Caco-2 (cell line): ENCODE measurements at regions of chr12 and their contacts with region 1.

Region 1: GRCh38 chr12:101570047-101570446 is 24.7 kb upstream of the MYBPC1 start:
- DNase-seq: peak; percentile 41 to 49
- H3K4me3 ChIP-seq: no peak overlapping the region
- H3K4me3 Mint-ChIP-seq: peak overlapping the region; percentile 7
- H3K27ac Mint-ChIP-seq: no peak overlapping the region
- H3K4me1 ChIP-seq: no peaks in the 10 kb centered on the region
- H3K4me1 Mint-ChIP-seq: peaks cover 8% of the 10 kb centered on the region
- H3K27me3 ChIP-seq: no peaks in the 10 kb centered on the region
- H3K27me3 Mint-ChIP-seq: no peaks in the 10 kb centered on the region
- CTCF ChIP-seq: peak; percentile 51 to 52

Region 2: GRCh38 chr12:100842156-100842555 is 727.9 kb before region 1 on chr12:
- CTCF ChIA-PET with region 1: no interaction called
- POLR2A ChIA-PET with region 1: no interaction called
- intact Hi-C with region 1: no loop called
- DNase-seq: no peak
- H3K4me3 ChIP-seq: no peak overlapping the region
- H3K4me3 Mint-ChIP-seq: no peak overlapping the region
- H3K27ac Mint-ChIP-seq: no peak overlapping the region
- H3K4me1 ChIP-seq: no peaks in the 10 kb centered on the region
- H3K4me1 Mint-ChIP-seq: peaks cover 9% of the 10 kb centered on the region
- H3K27me3 ChIP-seq: no peaks in the 10 kb centered on the region
- H3K27me3 Mint-ChIP-seq: peaks cover 18% of the 10 kb centered on the region
- CTCF ChIP-seq: no peak

Region 3: DNA sequence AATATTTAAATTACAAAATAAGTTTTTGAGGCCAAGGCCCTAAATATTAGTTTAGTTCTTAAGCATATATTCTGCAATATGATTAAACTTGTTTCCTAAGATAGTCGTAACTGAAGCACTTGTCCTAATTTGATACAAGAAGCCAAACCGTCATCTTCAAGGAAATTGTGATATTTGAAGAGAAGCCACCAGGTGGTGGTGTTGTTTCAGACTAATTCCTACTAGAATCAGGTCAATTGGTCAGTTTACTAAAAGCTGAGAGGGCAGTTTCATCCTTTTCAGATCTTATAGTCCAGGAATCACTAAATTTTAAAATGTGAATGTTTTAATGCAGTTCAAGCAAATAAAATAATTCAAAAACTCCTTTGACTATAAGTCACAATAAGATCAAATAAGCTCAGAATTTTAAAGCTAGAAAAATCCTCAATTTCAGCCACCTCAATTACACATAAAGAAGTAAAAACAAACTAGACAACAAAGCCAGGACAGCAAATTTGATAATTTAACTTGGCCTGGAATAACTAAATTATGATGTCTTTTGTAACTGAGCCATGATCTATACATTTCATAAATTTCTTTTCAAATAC is 155.4 kb before region 1 on chr12:
- CTCF ChIA-PET with region 1: no interaction called
- POLR2A ChIA-PET with region 1: no interaction called
- intact Hi-C with region 1: loop called (anchors 1 kb)
- DNase-seq: peak in 1 of 2 experiments; percentile 65
- H3K4me3 ChIP-seq: no peak overlapping the region
- H3K4me3 Mint-ChIP-seq: no peak overlapping the region
- H3K27ac Mint-ChIP-seq: no peak overlapping the region
- H3K4me1 ChIP-seq: no peaks in the 10 kb centered on the region
- H3K4me1 Mint-ChIP-seq: no peaks in the 10 kb centered on the region
- H3K27me3 ChIP-seq: no peaks in the 10 kb centered on the region
- H3K27me3 Mint-ChIP-seq: no peaks in the 10 kb centered on the region
- CTCF ChIP-seq: peak; percentile 42 to 58

Region 4: GRCh38 chr12:101607902-101608742 is 38.1 kb after region 1 on chr12:
- CTCF ChIA-PET with region 1: no interaction called
- POLR2A ChIA-PET with region 1: interaction called, 12 read pairs
- intact Hi-C with region 1: loop called (anchors 1 kb)
- DNase-seq: peak; percentile 90 to 92
- H3K4me3 ChIP-seq: no peak overlapping the region
- H3K4me3 Mint-ChIP-seq: peak overlapping the region; percentile 74
- H3K27ac Mint-ChIP-seq: peak overlapping the region; percentile 99
- H3K4me1 ChIP-seq: peaks cover 45% of the 10 kb centered on the region
- H3K4me1 Mint-ChIP-seq: peaks cover 22% of the 10 kb centered on the region
- H3K27me3 ChIP-seq: no peaks in the 10 kb centered on the region
- H3K27me3 Mint-ChIP-seq: no peaks in the 10 kb centered on the region
- CTCF ChIP-seq: no peak

Region 5: DNA sequence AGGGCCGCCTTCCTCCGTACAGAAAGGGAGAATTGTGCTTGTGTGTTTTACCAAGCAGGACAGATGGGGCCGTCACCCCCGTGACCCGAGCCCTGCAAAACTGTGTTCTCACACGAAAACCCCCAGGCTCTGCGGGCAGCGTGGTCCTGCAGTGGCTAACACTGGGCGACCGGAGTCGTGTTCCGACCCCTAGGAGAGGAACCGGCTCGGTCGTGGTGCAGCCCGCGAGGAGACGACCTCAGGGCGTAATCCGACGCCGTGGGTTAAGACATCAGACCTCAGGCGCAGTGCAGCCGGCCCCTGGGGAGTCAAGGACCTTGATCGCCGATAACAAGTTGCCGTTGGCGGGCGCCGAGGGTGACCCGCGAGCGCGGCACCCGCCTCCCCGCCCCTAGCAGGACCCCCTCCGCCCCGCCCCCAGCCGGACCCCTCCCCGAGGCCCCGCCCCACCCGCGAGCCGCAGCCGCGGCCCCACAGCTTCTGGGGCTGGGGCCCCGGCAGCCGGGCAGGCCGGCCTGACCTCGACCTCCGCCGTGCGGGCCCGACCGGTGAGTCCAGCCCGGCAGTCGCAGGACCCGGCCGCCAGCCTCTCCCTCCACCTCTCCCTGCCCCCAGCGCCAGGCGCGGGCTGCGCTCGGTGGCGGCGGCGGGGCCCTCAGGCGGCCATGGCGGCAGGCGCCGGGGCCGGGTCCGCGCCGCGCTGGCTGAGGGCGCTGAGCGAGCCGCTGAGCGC is 127.3 kb after region 1 on chr12 and contains the start of gene CHPT1:
- CTCF ChIA-PET with region 1: no interaction called
- POLR2A ChIA-PET with region 1: no interaction called
- intact Hi-C with region 1: loop called (anchors 1 kb)
- DNase-seq: peak; percentile 86 to 90
- H3K4me3 ChIP-seq: peak within 1 kb of the TSS; percentile 81
- H3K4me3 Mint-ChIP-seq: peak within 1 kb of the TSS; percentile 94
- H3K27ac Mint-ChIP-seq: peak within 1 kb of the TSS; percentile 77
- H3K4me1 ChIP-seq: peaks cover 15% of the 10 kb centered on the region
- H3K4me1 Mint-ChIP-seq: peaks cover 17% of the 10 kb centered on the region
- H3K27me3 ChIP-seq: no peaks in the 10 kb centered on the region
- H3K27me3 Mint-ChIP-seq: no peaks in the 10 kb centered on the region
- CTCF ChIP-seq: no peak
- total RNA-seq, gene CHPT1: 45.4 and 54.6 TPM in 2 replicates

Region 6: DNA sequence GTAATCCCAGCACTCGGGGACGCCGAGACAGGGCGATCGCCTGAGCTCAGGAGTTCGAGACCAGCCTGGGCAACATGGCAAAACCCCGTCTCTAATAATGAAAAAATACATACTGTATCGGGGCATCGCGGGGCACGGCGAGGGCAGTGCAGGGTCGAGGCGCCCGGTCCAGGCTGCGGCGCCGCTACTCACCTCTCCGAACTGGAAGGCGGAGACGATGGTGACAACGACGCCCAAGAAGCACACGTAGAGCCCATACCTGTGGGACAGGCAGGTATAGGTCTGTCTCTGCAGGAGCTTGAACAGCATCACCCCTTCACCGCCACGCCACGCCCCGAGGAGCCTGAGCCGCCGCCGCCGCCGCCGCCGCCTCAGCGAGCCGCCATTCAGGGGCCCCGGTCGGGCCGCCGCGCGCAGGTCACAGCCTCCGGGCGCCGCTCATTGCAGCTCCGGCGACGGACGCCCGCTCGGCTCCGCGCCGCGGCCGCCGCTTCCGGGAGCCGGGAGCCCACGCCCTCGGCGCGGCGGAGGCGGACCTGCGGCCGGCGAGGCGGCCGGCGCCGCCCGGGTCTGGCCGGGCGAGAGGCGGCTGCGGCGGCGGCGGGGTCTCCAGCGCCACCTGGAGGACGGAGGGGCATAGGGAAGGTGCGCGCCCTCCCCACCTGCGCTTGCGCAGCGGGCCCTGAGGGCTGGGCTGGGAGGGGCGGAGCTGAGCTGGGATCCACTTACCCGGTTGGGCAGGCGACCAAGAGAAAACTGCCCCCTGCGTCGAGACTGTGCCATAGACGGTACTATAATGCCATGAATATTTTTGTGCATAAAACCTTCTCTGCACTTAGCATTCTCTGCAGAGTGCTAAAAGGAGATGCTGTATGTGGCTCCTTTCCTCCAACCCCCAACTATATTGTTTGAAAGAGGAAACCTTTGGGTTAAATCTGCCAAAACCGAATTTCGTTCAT is 260.6 kb after region 1 on chr12 and contains the start of gene GNPTAB:
- CTCF ChIA-PET with region 1: no interaction called
- POLR2A ChIA-PET with region 1: no interaction called
- intact Hi-C with region 1: loop called (anchors 2 kb)
- DNase-seq: peak; percentile 93 to 95
- H3K4me3 ChIP-seq: peak within 1 kb of the TSS; percentile 98
- H3K4me3 Mint-ChIP-seq: peak within 1 kb of the TSS; percentile 90
- H3K27ac Mint-ChIP-seq: peak within 1 kb of the TSS; percentile 77
- H3K4me1 ChIP-seq: 0 out of 2 replicates have a peak, but pooled peaks cover 4% of the 10 kb centered on the region
- H3K4me1 Mint-ChIP-seq: no peaks in the 10 kb centered on the region
- H3K27me3 ChIP-seq: no peaks in the 10 kb centered on the region
- H3K27me3 Mint-ChIP-seq: no peaks in the 10 kb centered on the region
- CTCF ChIP-seq: peak; percentile 68 to 81
- total RNA-seq, gene GNPTAB: 33.1 and 39.1 TPM in 2 replicates